ENCODE measurements at regions of chr22 and their contacts with region 1.

Region 1: GRCh38 chr22:41091132-41092022 is 1.0 kb upstream of the EP300 start:
- DNase-seq: peak; percentile 100
- H3K4me3 Mint-ChIP-seq: peak overlapping the region; percentile 93
- H3K27ac Mint-ChIP-seq: peak overlapping the region; percentile 98
- H3K4me1 Mint-ChIP-seq: peaks cover 25% of the 10 kb centered on the region
- H3K27me3 Mint-ChIP-seq: no peaks in the 10 kb centered on the region

Region 2: DNA sequence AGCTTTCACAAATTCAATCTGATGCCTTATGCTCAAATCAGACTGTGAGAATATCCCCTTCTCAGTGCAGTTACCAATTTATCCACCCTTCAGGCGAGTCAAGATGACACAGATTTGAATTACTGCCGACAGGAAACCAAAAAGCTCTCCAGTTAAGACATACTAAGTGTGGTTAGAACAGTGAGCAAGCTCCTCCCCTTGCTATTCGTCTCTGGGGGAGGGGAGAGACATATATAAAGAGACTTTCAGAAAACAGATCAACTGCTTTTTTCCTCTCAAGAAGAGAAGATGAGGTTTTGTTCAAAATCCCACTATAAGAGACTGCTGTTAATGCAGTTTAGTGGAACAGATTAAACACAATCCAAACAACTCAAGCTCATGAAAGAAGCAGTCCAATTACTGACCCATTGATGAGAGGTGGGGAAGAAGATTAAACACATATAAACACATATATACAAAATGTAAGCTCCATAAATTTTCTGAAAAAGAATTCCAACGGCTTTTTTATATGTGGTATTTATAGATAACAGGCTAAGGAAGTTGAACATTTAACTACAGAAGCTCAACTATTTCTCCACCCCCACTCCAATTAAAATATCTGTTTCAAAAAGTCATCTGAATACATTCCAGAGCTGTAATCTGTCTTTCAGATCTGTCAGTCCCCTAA is 557.5 kb before region 1 on chr22:
- CTCF ChIA-PET with region 1: no interaction called
- POLR2A ChIA-PET with region 1: no interaction called
- intact Hi-C with region 1: loop called (anchors 10 kb)
- DNase-seq: peak; percentile 65
- H3K4me3 Mint-ChIP-seq: peak overlapping the region; percentile 78
- H3K27ac Mint-ChIP-seq: peak overlapping the region; percentile 83
- H3K4me1 Mint-ChIP-seq: peaks cover 64% of the 10 kb centered on the region
- H3K27me3 Mint-ChIP-seq: no peaks in the 10 kb centered on the region

Region 3: DNA sequence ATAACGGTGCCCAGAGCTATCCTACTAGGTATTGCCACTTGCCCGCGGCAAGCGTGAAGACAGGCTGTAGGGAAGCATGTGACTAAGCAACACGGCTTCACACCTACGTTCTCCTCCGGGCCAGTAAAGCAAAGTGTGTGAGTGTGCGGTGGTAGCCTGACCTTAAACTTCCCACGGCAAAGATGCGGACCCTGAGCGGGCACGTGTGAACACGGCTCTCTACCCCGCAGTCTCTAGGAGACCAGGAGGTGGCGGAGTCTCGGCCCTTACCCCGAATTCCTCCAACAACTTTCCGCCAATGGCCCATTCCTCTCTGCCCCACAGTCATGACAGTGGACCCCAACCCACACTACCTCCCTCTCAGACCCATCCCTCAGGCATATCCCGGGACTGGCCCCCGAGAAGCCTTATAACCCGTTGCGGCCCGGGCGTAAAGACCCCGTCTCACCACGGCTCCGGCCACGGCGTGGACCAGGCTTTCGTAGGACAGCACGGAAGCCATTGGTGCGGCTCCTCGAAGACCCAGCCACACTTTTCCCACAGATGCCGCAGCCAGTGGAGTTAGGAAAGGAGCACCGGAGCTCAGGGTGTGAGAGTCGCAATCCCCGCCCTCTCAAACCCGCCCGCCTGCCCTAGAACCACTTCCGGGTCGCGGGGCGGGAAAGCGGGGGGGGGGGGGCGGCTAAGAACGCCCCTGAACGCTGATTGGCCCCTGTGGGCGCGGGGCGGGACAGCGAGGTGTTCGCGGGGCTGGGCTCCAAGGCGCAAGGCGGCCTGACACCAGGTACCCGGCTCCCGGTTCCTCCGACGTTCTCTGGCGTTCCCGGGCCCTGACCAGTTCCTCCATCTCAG is 272.4 kb before region 1 on chr22 and contains the start of gene SLC25A17:
- CTCF ChIA-PET with region 1: no interaction called
- POLR2A ChIA-PET with region 1: no interaction called
- intact Hi-C with region 1: loop called (anchors 2 kb)
- DNase-seq: peak; percentile 92
- H3K4me3 Mint-ChIP-seq: peak within 1 kb of the TSS; percentile 92
- H3K27ac Mint-ChIP-seq: peak within 1 kb of the TSS; percentile 76
- H3K4me1 Mint-ChIP-seq: peaks cover 33% of the 10 kb centered on the region
- H3K27me3 Mint-ChIP-seq: no peaks in the 10 kb centered on the region
- total RNA-seq, gene SLC25A17: 29.3 to 30.8 TPM

Region 4: GRCh38 chr22:41022470-41023298 is 68.7 kb before region 1 on chr22:
- CTCF ChIA-PET with region 1: interaction called, 3 read pairs
- POLR2A ChIA-PET with region 1: interaction called, 18 read pairs
- intact Hi-C with region 1: loop called (anchors 1 kb)
- DNase-seq: peak; percentile 90
- H3K4me3 Mint-ChIP-seq: peak overlapping the region; percentile 79
- H3K27ac Mint-ChIP-seq: peak overlapping the region; percentile 70
- H3K4me1 Mint-ChIP-seq: peaks cover 14% of the 10 kb centered on the region
- H3K27me3 Mint-ChIP-seq: no peaks in the 10 kb centered on the region

Region 5: DNA sequence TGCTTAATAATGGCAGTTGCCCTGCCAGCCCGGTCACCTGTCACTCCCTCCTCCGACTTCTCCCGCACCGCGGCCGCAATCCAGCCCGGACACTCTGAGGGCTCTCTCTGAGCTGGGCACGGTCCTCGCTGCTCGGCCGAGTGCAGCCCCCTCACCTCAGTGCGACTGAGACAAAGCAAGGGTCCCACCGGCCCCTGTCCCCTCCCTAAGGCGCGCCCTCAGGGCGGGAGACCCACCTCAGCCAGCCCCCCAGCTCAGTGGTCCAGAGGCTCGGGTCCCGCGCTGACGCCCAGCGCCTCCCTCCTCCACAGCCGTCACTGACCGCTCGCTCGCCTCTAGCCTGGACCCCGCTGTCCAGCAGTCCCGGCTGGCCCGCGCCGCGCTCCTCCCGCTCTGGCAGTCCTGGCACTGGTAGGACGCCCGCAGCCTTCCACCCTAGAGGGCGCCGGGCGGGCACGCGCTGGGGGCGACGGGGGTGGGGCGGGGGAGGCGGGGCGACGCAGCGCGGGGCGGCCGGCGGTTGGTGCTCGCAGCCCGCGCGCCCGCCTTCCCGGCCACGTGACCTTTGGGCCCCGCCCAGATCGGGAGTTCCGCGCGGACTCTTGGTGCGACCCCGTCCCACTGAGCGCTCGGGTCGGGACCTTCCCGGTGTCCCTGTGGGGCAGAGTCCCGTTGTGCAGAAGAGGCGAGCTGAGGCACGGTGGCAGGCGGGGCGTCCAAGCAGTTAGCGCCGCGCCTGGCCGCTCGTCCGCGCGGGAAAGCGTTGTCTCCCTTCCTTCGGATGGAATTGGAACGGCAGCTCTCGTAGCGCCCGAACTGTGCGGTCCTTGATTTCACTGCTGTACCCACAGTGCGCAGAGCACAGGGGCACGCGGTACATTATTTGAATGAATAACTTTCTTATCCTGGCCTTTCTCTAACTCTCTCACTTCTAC is 105.9 kb after region 1 on chr22:
- CTCF ChIA-PET with region 1: no interaction called
- POLR2A ChIA-PET with region 1: no interaction called
- intact Hi-C with region 1: loop called (anchors 5 kb)
- DNase-seq: peak; percentile 85
- H3K4me3 Mint-ChIP-seq: peak overlapping the region; percentile 84
- H3K27ac Mint-ChIP-seq: no peak overlapping the region
- H3K4me1 Mint-ChIP-seq: peaks cover 9% of the 10 kb centered on the region
- H3K27me3 Mint-ChIP-seq: no peaks in the 10 kb centered on the region

Measured in activated CD4-positive, alpha-beta memory T cell treated with anti-CD3 and anti-CD28 coated beads for 36 hours (primary cell).